ENCODE measurements at regions of chr13 and their contacts with region 1.

Region 1: GRCh38 chr13:35789335-35790165 is 313.1 kb upstream of the MAB21L1 start:
- DNase-seq: no peak
- ATAC-seq: peak; percentile 71
- H3K4me3 ChIP-seq: no peak overlapping the region
- H3K27ac ChIP-seq: no peak overlapping the region
- H3K4me1 ChIP-seq: no peaks in the 10 kb centered on the region
- H3K27me3 ChIP-seq: no peaks in the 10 kb centered on the region
- CTCF ChIP-seq: peak; percentile 44 to 59 (median 45); a peak in 5 of 6 replicates
- EP300 ChIP-seq: no peak
- POLR2A ChIP-seq: no peak
- RAD21 ChIP-seq: peak; percentile 48

Region 2: DNA sequence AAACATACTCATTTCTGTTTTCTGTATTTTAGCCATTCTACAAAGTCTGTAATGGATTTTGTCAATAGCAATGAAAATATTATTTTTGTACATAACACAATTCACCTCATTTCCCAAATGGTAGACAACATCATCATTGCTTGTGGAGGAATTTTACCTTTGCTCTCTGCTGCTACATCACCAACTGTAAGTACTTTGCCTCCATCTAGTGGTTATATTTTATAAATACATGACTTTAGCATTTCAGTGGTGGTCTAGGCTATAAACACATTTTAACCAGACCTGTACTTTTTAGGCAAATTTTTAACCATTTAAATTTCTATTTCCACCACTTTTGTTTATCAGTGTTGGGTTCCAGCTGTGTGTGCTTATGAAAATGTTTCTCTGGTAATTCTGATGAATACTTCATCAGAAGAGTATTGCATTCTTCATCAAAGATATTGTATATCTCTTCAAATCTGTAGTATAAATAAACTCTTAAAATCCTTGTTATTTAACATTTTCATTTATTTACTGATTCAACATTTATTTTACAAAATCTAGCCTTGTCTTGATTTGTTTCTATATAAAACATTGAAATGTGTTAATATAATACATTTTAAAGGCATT is 625.1 kb before region 1 on chr13:
- CTCF ChIA-PET with region 1: interaction called, 13 read pairs
- POLR2A ChIA-PET with region 1: no interaction called
- RAD21 ChIA-PET with region 1: interaction called, 4 read pairs
- SMC1A ChIA-PET with region 1: no interaction called
- in situ Hi-C with region 1: no loop called
- intact Hi-C with region 1: loop called (anchors 5 kb)
- DNase-seq: peak; percentile 40
- ATAC-seq: peak; percentile 88
- H3K4me3 ChIP-seq: no peak overlapping the region
- H3K27ac ChIP-seq: no peak overlapping the region
- H3K4me1 ChIP-seq: peaks cover 22% of the 10 kb centered on the region
- H3K27me3 ChIP-seq: no peaks in the 10 kb centered on the region
- CTCF ChIP-seq: peak; percentile 47 to 78 (median 51); a peak in 5 of 6 replicates
- EP300 ChIP-seq: no peak
- POLR2A ChIP-seq: no peak
- RAD21 ChIP-seq: peak; percentile 87

Region 3: DNA sequence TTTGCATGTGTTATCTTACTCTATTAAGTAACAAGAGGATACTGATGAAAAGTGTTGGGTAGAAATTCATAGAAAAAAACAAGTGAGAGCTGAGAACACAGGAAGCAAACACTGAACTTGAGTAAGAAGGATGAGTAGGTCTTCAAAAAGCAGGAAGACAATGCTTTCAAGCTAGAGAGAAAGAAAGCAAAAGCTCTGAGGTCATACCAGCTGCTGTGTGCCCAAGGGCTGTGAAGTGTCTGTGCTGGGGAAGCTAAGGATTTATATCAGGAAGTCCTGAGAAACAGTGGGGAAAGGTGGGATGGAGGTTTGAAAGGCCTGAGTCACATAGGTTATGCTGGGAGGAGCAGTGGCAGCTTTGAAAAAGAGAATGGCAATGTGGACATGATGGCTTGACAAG is 167.6 kb before region 1 on chr13:
- CTCF ChIA-PET with region 1: interaction called, 3 read pairs
- POLR2A ChIA-PET with region 1: no interaction called
- RAD21 ChIA-PET with region 1: no interaction called
- SMC1A ChIA-PET with region 1: no interaction called
- in situ Hi-C with region 1: loop called (anchors 10 kb)
- intact Hi-C with region 1: no loop called
- DNase-seq: no peak
- ATAC-seq: no peak
- H3K4me3 ChIP-seq: no peak overlapping the region
- H3K27ac ChIP-seq: no peak overlapping the region
- H3K4me1 ChIP-seq: no peaks in the 10 kb centered on the region
- H3K27me3 ChIP-seq: no peaks in the 10 kb centered on the region
- CTCF ChIP-seq: no peak
- EP300 ChIP-seq: no peak
- POLR2A ChIP-seq: no peak
- RAD21 ChIP-seq: no peak

Region 4: DNA sequence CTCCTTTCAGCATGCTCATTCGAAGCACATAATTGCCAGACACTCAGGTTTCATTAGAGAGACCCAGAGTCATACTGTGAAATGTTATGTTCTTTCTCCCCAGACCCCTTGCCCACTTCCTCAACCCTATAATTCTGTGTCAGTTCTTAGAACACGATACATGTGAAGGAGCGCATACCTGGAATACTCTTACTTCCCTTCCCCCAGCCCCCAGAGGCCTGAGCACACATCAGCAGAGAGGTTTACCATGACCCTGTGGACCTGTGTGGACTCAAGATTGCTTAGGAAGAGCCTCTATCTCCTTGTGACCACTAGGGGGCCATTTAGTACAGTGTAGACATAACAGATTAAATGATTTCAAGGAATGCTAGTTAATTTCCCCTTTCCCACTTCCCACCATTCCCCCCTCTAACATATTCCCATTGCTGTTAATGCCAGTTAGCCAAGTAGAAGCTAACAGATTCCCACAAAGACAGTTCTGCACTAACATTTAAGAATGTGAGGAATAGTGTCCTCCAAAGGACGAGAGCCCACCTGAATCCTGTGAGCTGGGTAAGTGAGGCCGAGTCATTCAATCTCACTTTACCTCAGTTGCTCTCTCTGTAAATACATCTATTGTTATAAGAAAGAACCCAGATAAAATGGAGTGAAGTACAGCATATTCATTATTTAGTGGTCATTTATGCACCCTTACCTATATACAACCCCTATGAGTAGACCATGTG is 158.8 kb before region 1 on chr13:
- CTCF ChIA-PET with region 1: interaction called, 37 read pairs
- POLR2A ChIA-PET with region 1: no interaction called
- RAD21 ChIA-PET with region 1: interaction called, 25 read pairs
- SMC1A ChIA-PET with region 1: interaction called, 34 read pairs
- in situ Hi-C with region 1: loop called (anchors 10 kb)
- intact Hi-C with region 1: loop called (anchors 1 kb)
- DNase-seq: no peak
- ATAC-seq: peak; percentile 96
- H3K4me3 ChIP-seq: no peak overlapping the region
- H3K27ac ChIP-seq: no peak overlapping the region
- H3K4me1 ChIP-seq: no peaks in the 10 kb centered on the region
- H3K27me3 ChIP-seq: no peaks in the 10 kb centered on the region
- CTCF ChIP-seq: peak; percentile 54 to 72 (median 65)
- EP300 ChIP-seq: no peak
- POLR2A ChIP-seq: no peak
- RAD21 ChIP-seq: 0 out of 2 replicates have a peak, but pooled peaks have one; percentile 20

Region 5: GRCh38 chr13:35720690-35721554 is 68.6 kb before region 1 on chr13:
- CTCF ChIA-PET with region 1: interaction called, 8 read pairs
- POLR2A ChIA-PET with region 1: interaction called, 3 read pairs
- RAD21 ChIA-PET with region 1: interaction called, 14 read pairs
- SMC1A ChIA-PET with region 1: interaction called, 15 read pairs
- in situ Hi-C with region 1: no loop called
- intact Hi-C with region 1: loop called (anchors 5 kb)
- DNase-seq: no peak
- ATAC-seq: peak; percentile 76
- H3K4me3 ChIP-seq: no peak overlapping the region
- H3K27ac ChIP-seq: no peak overlapping the region
- H3K4me1 ChIP-seq: no peaks in the 10 kb centered on the region
- H3K27me3 ChIP-seq: no peaks in the 10 kb centered on the region; a peak in 1 of 4 replicates
- CTCF ChIP-seq: peak; percentile 66 to 90 (median 86)
- EP300 ChIP-seq: no peak
- POLR2A ChIP-seq: no peak
- RAD21 ChIP-seq: peak; percentile 73

Region 6: GRCh38 chr13:35729926-35730627 is 59.5 kb before region 1 on chr13:
- CTCF ChIA-PET with region 1: interaction called, 18 read pairs
- POLR2A ChIA-PET with region 1: interaction called, 3 read pairs
- RAD21 ChIA-PET with region 1: interaction called, 11 read pairs
- SMC1A ChIA-PET with region 1: interaction called, 6 read pairs
- in situ Hi-C with region 1: no loop called
- intact Hi-C with region 1: no loop called
- DNase-seq: peak; percentile 38
- ATAC-seq: peak; percentile 89
- H3K4me3 ChIP-seq: no peak overlapping the region
- H3K27ac ChIP-seq: peak overlapping the region; percentile 18; the same call in 1 of the 2 replicates
- H3K4me1 ChIP-seq: peaks cover 5% of the 10 kb centered on the region; the same call in 1 of the 2 replicates
- H3K27me3 ChIP-seq: no peaks in the 10 kb centered on the region
- CTCF ChIP-seq: no peak
- EP300 ChIP-seq: no peak; a peak in 1 of 4 replicates
- POLR2A ChIP-seq: no peak
- RAD21 ChIP-seq: no peak

Region 7: DNA sequence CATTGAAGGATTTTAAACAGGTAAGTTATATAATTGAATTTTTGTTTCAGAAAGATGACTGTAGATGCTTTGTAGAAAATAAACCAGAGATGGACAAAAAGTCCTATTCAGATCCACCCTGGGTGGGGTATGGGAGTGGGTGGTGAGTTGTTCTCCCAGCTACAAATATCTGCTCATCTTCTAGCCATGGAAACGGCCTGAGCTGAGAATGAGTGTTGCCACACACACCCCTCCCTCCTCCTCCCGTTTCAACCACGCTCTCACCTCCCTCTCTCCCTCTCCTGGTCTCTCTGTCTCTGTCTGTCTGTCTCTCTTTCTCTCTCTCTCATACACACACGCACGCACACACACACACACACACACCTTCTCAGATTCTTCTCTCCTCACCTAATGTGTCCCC is 910.6 kb after region 1 on chr13:
- CTCF ChIA-PET with region 1: no interaction called
- POLR2A ChIA-PET with region 1: no interaction called
- RAD21 ChIA-PET with region 1: no interaction called
- SMC1A ChIA-PET with region 1: no interaction called
- in situ Hi-C with region 1: no loop called
- intact Hi-C with region 1: no loop called
- DNase-seq: no peak
- ATAC-seq: no peak
- H3K4me3 ChIP-seq: no peak overlapping the region
- H3K27ac ChIP-seq: no peak overlapping the region
- H3K4me1 ChIP-seq: no peaks in the 10 kb centered on the region
- H3K27me3 ChIP-seq: no peaks in the 10 kb centered on the region
- CTCF ChIP-seq: no peak
- EP300 ChIP-seq: no peak
- POLR2A ChIP-seq: no peak
- RAD21 ChIP-seq: no peak

Region 8: DNA sequence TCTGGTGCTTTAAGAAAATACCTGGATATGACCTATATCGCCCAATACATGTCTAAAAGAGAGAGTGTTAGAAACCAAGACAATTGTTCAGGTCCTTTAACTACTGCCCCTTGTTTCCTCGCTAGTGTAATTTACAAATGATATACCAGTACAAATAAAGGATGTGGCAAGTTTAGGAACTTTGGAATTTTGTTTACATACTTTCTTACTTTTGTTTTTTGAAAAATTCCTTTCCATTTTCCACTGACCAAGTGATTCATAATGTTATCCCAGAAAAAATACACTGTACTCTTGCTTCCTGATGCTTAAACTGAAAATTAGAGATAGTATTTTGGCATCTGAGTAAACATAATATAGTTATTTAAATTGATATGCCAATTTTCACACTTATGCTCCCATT is 1412.7 kb after region 1 on chr13:
- CTCF ChIA-PET with region 1: no interaction called
- POLR2A ChIA-PET with region 1: no interaction called
- RAD21 ChIA-PET with region 1: no interaction called
- SMC1A ChIA-PET with region 1: no interaction called
- in situ Hi-C with region 1: no loop called
- intact Hi-C with region 1: no loop called
- DNase-seq: no peak
- ATAC-seq: no peak
- H3K4me3 ChIP-seq: no peak overlapping the region
- H3K27ac ChIP-seq: no peak overlapping the region
- H3K4me1 ChIP-seq: no peaks in the 10 kb centered on the region
- H3K27me3 ChIP-seq: no peaks in the 10 kb centered on the region
- CTCF ChIP-seq: no peak
- EP300 ChIP-seq: no peak
- POLR2A ChIP-seq: no peak
- RAD21 ChIP-seq: no peak